PC-9 (cell line): ENCODE measurements at regions of chr12 and their contacts with region 1.

Region 1: DNA sequence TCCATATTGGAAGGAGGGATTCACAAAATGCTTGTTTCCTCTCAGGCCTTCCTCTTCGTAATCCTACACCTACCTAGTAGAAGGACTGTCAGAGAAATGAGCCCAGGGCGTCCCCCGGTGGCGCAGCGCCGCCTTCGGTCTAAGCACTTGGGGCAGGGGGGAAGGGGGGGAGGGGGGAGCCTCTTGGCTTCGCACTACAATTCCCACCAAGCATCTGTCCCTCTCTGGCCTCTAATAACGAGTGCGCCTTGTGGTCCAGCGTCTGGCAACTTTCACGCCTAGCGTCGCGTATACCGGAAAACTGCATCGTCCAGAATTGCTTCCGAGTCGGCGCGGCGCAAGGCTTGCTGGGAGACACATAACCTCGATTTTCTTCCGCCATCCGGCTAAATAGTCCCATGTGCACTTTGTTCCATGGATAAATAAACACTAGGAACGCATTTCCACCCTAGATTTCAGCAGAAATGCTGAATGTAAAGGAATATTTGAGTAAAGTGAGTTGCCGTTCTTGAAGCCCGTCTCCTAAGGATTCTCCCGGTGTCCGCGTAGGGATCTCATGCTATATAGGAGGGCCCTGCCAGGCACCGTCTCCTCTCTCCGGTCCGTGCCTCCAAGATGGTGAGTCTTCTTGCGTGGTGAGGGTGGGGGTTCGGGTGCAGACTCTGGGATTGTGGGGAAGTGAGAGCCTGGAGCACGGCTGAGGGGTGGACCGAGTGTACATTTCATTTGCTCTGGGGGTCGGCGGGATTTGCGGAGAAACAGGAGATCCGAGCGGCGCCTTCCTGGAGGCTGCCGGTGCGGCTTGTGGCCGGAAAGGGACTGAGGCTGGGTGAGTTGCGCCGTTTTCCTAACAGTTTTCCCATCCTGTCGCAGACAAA is at the start of gene RPS26:
- DNase-seq: peak; percentile 95 to 96
- H3K4me3 ChIP-seq: peak within 1 kb of the TSS; percentile 73
- H3K27ac ChIP-seq: peak within 1 kb of the TSS; percentile 68
- H3K4me1 ChIP-seq: peaks cover 24% of the 10 kb centered on the region
- H3K27me3 ChIP-seq: no peaks in the 10 kb centered on the region
- CTCF ChIP-seq: peak; percentile 51
- total RNA-seq, gene RPS26: 25.2 and 43.3 TPM in 2 replicates

Region 2: DNA sequence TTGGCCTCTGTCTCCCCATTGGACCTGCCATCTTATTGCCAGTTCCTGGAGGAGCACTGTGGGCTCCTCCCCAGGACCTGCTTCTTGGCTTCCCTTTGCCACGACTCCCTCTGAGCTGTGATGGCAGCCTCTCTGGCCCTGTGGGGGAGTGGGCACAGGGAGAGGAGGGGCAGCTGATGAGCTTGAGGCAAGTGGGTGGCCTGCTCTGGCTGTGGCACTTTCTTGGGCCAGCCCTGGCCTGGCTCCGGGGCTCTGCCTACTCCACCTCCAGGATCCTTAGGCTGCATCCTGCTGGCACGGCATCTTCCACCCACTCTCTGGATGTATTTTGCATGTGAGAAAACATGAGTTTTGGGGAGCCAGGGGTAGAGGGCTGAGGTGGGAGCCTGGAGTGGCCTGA is 1220.1 kb before region 1 on chr12:
- CTCF ChIA-PET with region 1: no interaction called
- POLR2A ChIA-PET with region 1: no interaction called
- intact Hi-C with region 1: no loop called
- DNase-seq: no peak
- H3K4me3 ChIP-seq: no peak overlapping the region
- H3K27ac ChIP-seq: no peak overlapping the region
- H3K4me1 ChIP-seq: no peaks in the 10 kb centered on the region
- H3K27me3 ChIP-seq: no peaks in the 10 kb centered on the region
- CTCF ChIP-seq: no peak

Region 3: GRCh38 chr12:55629058-55629841 is 412.5 kb before region 1 on chr12:
- CTCF ChIA-PET with region 1: no interaction called
- POLR2A ChIA-PET with region 1: no interaction called
- intact Hi-C with region 1: no loop called
- DNase-seq: no peak
- H3K4me3 ChIP-seq: no peak overlapping the region
- H3K27ac ChIP-seq: no peak overlapping the region
- H3K4me1 ChIP-seq: no peaks in the 10 kb centered on the region
- H3K27me3 ChIP-seq: peaks cover 50% of the 10 kb centered on the region
- CTCF ChIP-seq: no peak

Region 4: GRCh38 chr12:55817346-55818139 is 224.2 kb before region 1 on chr12 and contains the starts of genes ORMDL2 and SARNP:
- CTCF ChIA-PET with region 1: interaction called, 3 read pairs
- POLR2A ChIA-PET with region 1: interaction called, 4 read pairs
- intact Hi-C with region 1: loop called (anchors 5 kb)
- DNase-seq: peak; percentile 96 to 99
- H3K4me3 ChIP-seq: peak within 1 kb of the TSS; percentile 72
- H3K27ac ChIP-seq: peak within 1 kb of the TSS; percentile 51
- H3K4me1 ChIP-seq: peaks cover 18% of the 10 kb centered on the region
- H3K27me3 ChIP-seq: no peaks in the 10 kb centered on the region
- CTCF ChIP-seq: no peak
- total RNA-seq, gene ORMDL2: 22.5 and 22.9 TPM in 2 replicates
- total RNA-seq, gene SARNP: 65.6 and 74.8 TPM in 2 replicates

Region 5: DNA sequence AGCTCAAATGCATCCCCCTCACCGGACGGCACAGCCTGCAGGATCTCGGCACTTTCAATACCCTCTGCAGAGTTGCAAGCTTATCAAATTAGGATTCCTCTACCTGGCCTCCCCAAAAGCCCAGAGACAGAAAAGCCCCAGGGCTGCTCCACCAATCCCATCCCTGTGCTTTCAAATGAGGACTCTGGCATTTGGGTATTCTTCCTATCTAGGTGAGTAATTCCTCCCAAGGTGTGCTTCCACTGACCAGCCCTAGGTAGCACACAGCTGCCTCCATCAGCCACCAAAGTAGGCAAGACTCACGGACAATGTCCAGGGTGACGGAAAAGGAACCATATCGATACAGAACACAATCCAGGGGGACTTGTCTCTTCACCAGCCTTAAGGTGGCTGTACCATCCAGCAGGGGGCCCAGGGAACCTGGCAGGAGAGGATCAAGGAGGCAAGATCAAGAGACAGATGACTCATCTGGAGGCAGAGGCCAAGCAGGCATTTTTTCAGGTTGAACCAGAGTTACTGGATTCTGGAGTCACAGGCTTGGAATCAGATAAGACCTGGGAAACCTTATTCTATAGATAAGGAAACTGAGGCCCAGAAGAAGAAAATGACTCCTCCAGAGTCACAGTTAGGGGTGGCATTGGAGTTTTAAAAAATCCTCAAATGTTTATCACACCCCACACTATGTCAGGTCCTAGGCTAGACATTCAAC is 85.8 kb before region 1 on chr12:
- CTCF ChIA-PET with region 1: no interaction called
- POLR2A ChIA-PET with region 1: no interaction called
- intact Hi-C with region 1: loop called (anchors 10 kb)
- DNase-seq: peak; percentile 84 to 93
- H3K4me3 ChIP-seq: no peak overlapping the region
- H3K27ac ChIP-seq: peak overlapping the region; percentile 58
- H3K4me1 ChIP-seq: peaks cover 43% of the 10 kb centered on the region
- H3K27me3 ChIP-seq: no peaks in the 10 kb centered on the region
- CTCF ChIP-seq: peak; percentile 81

Region 6: GRCh38 chr12:56029666-56030293 is 12.0 kb before region 1 on chr12:
- CTCF ChIA-PET with region 1: interaction called, 20 read pairs
- POLR2A ChIA-PET with region 1: no interaction called
- intact Hi-C with region 1: no loop called
- DNase-seq: peak; percentile 16 to 49
- H3K4me3 ChIP-seq: no peak overlapping the region
- H3K27ac ChIP-seq: peak overlapping the region; percentile 64
- H3K4me1 ChIP-seq: peaks cover 17% of the 10 kb centered on the region
- H3K27me3 ChIP-seq: no peaks in the 10 kb centered on the region
- CTCF ChIP-seq: peak; percentile 79

Region 7: GRCh38 chr12:56053407-56053893 is 11.7 kb after region 1 on chr12:
- CTCF ChIA-PET with region 1: no interaction called
- POLR2A ChIA-PET with region 1: no interaction called
- intact Hi-C with region 1: no loop called
- DNase-seq: no peak
- H3K4me3 ChIP-seq: no peak overlapping the region
- H3K27ac ChIP-seq: no peak overlapping the region
- H3K4me1 ChIP-seq: peaks cover 10% of the 10 kb centered on the region
- H3K27me3 ChIP-seq: no peaks in the 10 kb centered on the region
- CTCF ChIP-seq: no peak

Region 8: GRCh38 chr12:56098592-56098991 is 56.8 kb after region 1 on chr12:
- CTCF ChIA-PET with region 1: no interaction called
- POLR2A ChIA-PET with region 1: interaction called, 27 read pairs
- intact Hi-C with region 1: no loop called
- DNase-seq: no peak
- H3K4me3 ChIP-seq: no peak overlapping the region
- H3K27ac ChIP-seq: no peak overlapping the region
- H3K4me1 ChIP-seq: peaks cover 9% of the 10 kb centered on the region
- H3K27me3 ChIP-seq: no peaks in the 10 kb centered on the region
- CTCF ChIP-seq: no peak

Region 9: DNA sequence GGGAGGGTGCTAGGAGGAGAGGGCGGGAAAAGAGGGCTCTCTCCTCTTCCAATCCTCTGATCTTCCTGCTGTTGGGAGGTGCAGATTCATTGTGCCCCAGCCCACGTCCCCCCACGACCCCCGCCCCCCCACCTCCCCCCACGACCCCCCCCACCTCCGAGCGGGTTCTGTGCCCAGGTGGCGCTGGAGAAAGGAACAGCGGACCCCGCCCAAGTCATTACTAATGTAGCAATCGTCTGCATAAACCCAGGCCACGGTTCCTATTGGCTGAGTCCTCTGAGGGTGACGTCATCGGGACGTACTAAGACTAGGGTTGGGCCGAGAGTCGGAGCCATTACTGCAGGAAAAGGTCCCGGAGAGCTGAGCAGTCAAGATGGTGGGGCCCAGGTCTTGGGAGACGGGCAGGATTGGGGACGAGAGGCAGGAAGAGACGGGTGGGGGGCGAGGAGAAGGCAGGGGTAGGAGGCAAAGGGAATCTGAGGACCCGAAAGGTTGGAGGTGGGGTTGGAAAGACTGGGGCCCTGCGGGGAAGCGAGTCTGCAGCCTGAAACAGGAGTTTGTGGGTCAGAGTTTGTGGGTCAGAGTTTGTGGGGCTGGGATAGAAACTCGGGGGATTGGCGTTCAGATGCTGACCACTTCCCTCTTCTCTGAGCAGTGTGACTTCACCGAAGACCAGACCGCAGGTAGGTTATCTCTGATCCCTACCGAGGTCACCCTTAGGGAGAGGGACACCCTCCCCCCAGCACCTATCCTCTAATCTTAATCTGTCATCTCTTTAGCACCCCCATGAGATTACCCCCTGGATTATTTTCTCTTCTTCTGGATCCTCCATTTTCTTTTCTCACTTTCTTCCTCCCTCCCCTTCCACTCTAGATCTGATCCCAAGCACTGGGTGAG is 116.5 kb after region 1 on chr12 and contains the start of gene MYL6:
- CTCF ChIA-PET with region 1: no interaction called
- POLR2A ChIA-PET with region 1: interaction called, 4 read pairs
- intact Hi-C with region 1: loop called (anchors 10 kb)
- DNase-seq: peak; percentile 89 to 93
- H3K4me3 ChIP-seq: peak within 1 kb of the TSS; percentile 95
- H3K27ac ChIP-seq: peak within 1 kb of the TSS; percentile 82
- H3K4me1 ChIP-seq: peaks cover 26% of the 10 kb centered on the region
- H3K27me3 ChIP-seq: no peaks in the 10 kb centered on the region
- CTCF ChIP-seq: no peak
- total RNA-seq, gene MYL6: 666 and 697 TPM in 2 replicates

Region 10: GRCh38 chr12:56178347-56178746 is 136.6 kb after region 1 on chr12:
- CTCF ChIA-PET with region 1: no interaction called
- POLR2A ChIA-PET with region 1: no interaction called
- intact Hi-C with region 1: no loop called
- DNase-seq: no peak
- H3K4me3 ChIP-seq: no peak overlapping the region
- H3K27ac ChIP-seq: no peak overlapping the region
- H3K4me1 ChIP-seq: no peaks in the 10 kb centered on the region
- H3K27me3 ChIP-seq: no peaks in the 10 kb centered on the region
- CTCF ChIP-seq: no peak